Naive thymus-derived CD4-positive, alpha-beta T cell (primary cell): ENCODE measurements at regions of chr1 and their contacts with region 1.

Region 1: DNA sequence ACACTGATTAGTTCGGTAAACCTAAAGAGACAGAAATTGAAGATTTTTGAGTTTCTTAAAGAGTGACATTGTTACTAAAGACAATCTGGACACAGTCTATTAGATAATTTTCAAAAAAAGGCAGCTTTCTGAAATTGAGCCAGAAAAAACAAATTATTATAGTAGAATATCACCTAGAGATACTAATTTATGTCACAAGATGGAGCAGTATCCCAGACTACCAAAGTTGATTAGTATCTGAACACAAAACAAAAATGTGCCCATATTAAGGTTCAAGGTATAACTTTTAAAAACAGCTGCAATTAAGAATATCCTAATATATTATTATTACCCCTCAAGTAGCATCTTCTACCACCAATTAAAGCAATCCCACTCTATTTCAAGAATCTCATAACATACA is 40.5 kb upstream of the SYT2 start:
- DNase-seq: peak in 2 of 9 donors; percentile 4 to 19
- ATAC-seq: no peak
- H3K4me3 ChIP-seq: no peak overlapping the region
- H3K4me3 Mint-ChIP-seq: no peak overlapping the region
- H3K27ac ChIP-seq: no peak overlapping the region
- H3K27ac Mint-ChIP-seq: peak overlapping the region in 1 of 9 donors; percentile 45
- H3K4me1 ChIP-seq: no peaks in the 10 kb centered on the region
- H3K4me1 Mint-ChIP-seq: peaks cover 0 to 5% (median 0%) of the 10 kb centered on the region in 7 donors
- H3K27me3 ChIP-seq: no peaks in the 10 kb centered on the region
- H3K27me3 Mint-ChIP-seq: no peaks in the 10 kb centered on the region

Region 2: DNA sequence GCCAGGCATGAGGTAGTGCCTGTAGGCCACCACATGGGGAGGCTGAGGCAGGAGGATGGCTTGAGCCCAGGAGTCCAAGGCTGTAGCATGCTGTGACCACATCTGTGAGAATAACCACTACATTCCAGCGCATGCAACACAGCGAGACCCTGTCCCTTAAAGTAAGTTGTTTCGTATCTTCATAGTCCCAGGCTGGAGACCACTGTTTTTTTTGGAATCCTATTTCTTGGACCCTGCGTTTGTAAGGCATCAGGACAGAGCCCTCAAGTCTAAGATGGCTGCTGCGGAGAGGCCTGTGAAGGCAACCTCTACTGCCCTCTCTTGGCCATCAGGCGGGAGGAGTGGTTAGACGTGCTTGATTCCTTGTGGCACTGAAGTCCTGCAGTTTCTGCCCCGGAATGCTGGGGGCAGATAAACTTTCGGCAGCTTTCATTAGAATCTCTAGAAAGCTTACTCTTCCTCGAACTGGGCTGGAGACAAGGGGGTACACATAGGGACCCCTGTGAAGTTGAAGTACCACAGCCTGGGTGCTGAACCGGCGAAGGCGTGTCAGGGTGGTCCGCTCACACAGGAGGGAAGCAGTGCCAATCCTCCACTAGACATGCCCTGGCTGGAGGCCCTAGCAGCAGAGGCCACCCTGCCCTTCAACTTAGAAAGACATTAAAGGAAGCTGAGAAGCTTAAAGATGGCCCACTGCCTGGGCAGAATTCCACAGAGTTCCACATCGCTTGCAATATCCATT is 101.6 kb after region 1 on chr1:
- CTCF ChIA-PET with region 1: interaction called, 4 read pairs
- POLR2A ChIA-PET with region 1: no interaction called
- intact Hi-C with region 1: loop called in 1 of 2 experiments (anchors 1 kb)
- DNase-seq: peak in 3 of 9 donors; percentile 20 to 43 (median 25)
- ATAC-seq: peak; percentile 70
- H3K4me3 ChIP-seq: no peak overlapping the region
- H3K4me3 Mint-ChIP-seq: no peak overlapping the region
- H3K27ac ChIP-seq: no peak overlapping the region
- H3K27ac Mint-ChIP-seq: peak overlapping the region in 2 of 9 donors; percentile 14 to 53
- H3K4me1 ChIP-seq: no peaks in the 10 kb centered on the region
- H3K4me1 Mint-ChIP-seq: peaks cover 0 to 27% (median 0%) of the 10 kb centered on the region in 7 donors
- H3K27me3 ChIP-seq: no peaks in the 10 kb centered on the region
- H3K27me3 Mint-ChIP-seq: no peaks in the 10 kb centered on the region